SK-N-SH (cell line): ENCODE measurements at regions of chr5 and their contacts with region 1.

Region 1: GRCh38 chr5:179763215-179763945 is 30.4 kb upstream of the LTC4S start:
- DNase-seq: peak; percentile 84
- H3K4me3 ChIP-seq: peak overlapping the region in 1 of 2 experiments; percentile 34; a peak in 1 of 4 replicates
- H3K27ac ChIP-seq: peak overlapping the region; percentile 54 to 88
- H3K4me1 ChIP-seq: peaks cover 38 to 54% of the 10 kb centered on the region in 2 experiments
- H3K27me3 ChIP-seq: no peaks in the 10 kb centered on the region
- CTCF ChIP-seq: peak; percentile 95
- EP300 ChIP-seq: no peak
- RAD21 ChIP-seq: peak; percentile 82

Region 2: GRCh38 chr5:179577286-179577960 is 186.0 kb before region 1 on chr5:
- CTCF ChIA-PET with region 1: no interaction called
- POLR2A ChIA-PET with region 1: no interaction called
- DNase-seq: no peak
- H3K4me3 ChIP-seq: no peak overlapping the region
- H3K27ac ChIP-seq: no peak overlapping the region
- H3K4me1 ChIP-seq: no peaks in the 10 kb centered on the region
- H3K27me3 ChIP-seq: no peaks in the 10 kb centered on the region
- CTCF ChIP-seq: no peak
- EP300 ChIP-seq: no peak
- RAD21 ChIP-seq: no peak

Region 3: DNA sequence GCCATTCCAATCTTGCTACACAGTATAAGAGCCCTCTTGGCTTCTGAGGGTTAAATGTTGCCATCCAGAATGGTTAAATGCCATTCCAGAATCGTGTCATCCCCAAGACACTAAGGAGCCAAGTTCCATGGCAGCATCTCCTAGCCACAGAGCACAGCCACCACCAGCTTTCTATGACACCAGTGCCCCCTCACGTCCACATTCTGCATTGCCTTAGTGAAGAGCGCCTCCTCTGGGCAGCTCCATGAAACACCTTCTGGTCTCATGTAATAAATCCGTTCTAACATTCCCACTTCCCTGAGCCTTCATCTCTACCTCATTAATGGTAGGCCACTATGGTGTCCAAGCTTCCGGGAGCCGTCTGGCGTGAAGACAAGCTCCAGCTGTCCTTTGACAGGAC is 95.0 kb before region 1 on chr5:
- CTCF ChIA-PET with region 1: no interaction called
- POLR2A ChIA-PET with region 1: no interaction called
- DNase-seq: peak; percentile 52
- H3K4me3 ChIP-seq: peak overlapping the region in 1 of 2 experiments; percentile 45; a peak in 1 of 4 replicates
- H3K27ac ChIP-seq: no peak overlapping the region
- H3K4me1 ChIP-seq: no peaks in the 10 kb centered on the region
- H3K27me3 ChIP-seq: no peaks in the 10 kb centered on the region
- CTCF ChIP-seq: peak; percentile 59
- EP300 ChIP-seq: no peak
- RAD21 ChIP-seq: peak; percentile 59

Region 4: DNA sequence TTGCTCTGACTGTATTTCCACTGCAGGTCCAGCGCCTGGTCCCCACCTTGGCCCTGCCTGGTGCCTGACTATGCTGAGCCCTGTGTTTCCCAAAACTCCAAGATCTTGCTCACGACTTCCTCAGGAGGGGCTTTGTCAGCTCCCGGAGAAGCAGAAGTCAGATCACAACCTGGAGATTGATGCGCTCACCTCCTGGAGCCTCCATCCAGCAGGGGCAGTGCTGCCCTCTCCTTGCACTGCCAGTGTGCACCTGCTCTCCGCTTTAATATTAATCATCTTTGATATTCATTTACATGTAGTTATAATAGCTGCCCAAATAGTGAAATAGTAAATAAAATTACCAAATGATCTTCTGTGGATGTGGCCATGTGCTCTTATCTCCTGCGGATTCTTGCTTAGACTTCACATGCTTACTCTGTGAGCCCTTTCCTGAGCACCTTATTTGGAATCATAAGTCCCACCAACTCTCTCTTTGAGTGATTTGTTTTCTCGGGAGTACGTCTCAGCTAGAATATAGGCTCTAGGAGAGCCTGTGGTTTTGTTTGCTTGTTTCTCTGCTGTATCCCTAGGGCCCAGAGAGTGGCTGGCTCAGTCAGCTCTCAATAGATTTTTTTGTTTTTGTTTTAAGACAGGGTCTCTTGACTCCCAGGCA is 13.4 kb before region 1 on chr5:
- CTCF ChIA-PET with region 1: interaction called, 17 read pairs
- POLR2A ChIA-PET with region 1: no interaction called
- DNase-seq: no peak
- H3K4me3 ChIP-seq: no peak overlapping the region
- H3K27ac ChIP-seq: no peak overlapping the region
- H3K4me1 ChIP-seq: no peaks in the 10 kb centered on the region; a peak in 1 of 4 replicates
- H3K27me3 ChIP-seq: no peaks in the 10 kb centered on the region
- CTCF ChIP-seq: peak; percentile 11; the same call in 1 of the 2 replicates
- EP300 ChIP-seq: no peak
- RAD21 ChIP-seq: no peak

Region 5: DNA sequence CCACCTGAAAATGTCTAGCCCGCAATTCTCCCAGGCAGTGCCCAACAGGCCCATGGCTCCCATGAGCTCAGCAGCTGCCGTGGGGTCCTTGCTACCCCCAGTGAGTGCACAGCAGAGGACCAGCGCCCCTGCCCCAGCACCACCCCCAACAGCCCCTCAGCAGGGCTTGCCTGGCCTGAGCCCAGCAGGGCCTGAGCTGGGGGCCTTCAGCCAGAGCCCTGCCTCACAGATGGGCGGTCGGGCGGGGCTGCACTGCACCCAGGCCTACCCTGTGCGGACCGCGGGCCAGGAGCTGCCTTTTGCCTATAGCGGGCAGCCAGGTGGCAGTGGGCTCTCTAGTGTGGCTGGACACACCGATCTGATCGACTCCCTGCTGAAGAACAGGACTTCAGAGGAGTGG is 11.1 kb after region 1 on chr5:
- CTCF ChIA-PET with region 1: interaction called, 35 read pairs
- POLR2A ChIA-PET with region 1: no interaction called
- DNase-seq: no peak
- H3K4me3 ChIP-seq: no peak overlapping the region
- H3K27ac ChIP-seq: no peak overlapping the region
- H3K4me1 ChIP-seq: no peaks in the 10 kb centered on the region
- H3K27me3 ChIP-seq: no peaks in the 10 kb centered on the region
- CTCF ChIP-seq: no peak
- EP300 ChIP-seq: no peak
- RAD21 ChIP-seq: no peak

Region 6: DNA sequence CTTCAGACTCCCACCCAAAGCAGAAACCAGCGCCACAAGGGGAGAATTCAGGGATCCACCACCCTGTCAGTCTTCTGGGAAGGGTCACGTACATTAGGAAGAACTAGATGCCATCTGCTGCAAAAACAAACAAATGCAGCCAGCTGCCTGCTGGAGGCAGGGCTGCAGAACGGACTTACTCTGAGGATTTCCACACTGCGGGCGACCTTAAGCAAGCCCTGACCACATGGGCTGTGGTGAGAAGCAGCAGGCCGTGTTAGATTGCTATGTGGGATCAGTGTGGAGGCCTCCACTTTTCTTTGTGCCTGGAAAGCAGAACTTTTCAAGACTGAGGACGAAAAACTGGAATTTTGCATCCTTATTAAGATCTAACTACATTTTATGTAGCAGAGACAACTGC is 17.0 kb after region 1 on chr5:
- CTCF ChIA-PET with region 1: interaction called, 35 read pairs
- POLR2A ChIA-PET with region 1: interaction called, 4 read pairs
- DNase-seq: no peak
- H3K4me3 ChIP-seq: no peak overlapping the region
- H3K27ac ChIP-seq: no peak overlapping the region
- H3K4me1 ChIP-seq: no peaks in the 10 kb centered on the region
- H3K27me3 ChIP-seq: no peaks in the 10 kb centered on the region
- CTCF ChIP-seq: no peak
- EP300 ChIP-seq: no peak
- RAD21 ChIP-seq: no peak

Region 7: GRCh38 chr5:179795863-179796833 is 32.8 kb after region 1 on chr5:
- CTCF ChIA-PET with region 1: interaction called, 67 read pairs
- POLR2A ChIA-PET with region 1: interaction called, 3 read pairs
- DNase-seq: peak; percentile 92
- H3K4me3 ChIP-seq: peak overlapping the region; percentile 57 to 59
- H3K27ac ChIP-seq: peak overlapping the region; percentile 36 to 43; a peak in 3 of 4 replicates
- H3K4me1 ChIP-seq: peaks cover 0 to 14% of the 10 kb centered on the region in 2 experiments; a peak in 1 of 4 replicates
- H3K27me3 ChIP-seq: no peaks in the 10 kb centered on the region
- CTCF ChIP-seq: peak; percentile 61
- EP300 ChIP-seq: no peak
- RAD21 ChIP-seq: peak; percentile 59